GM12878 (cell line): ENCODE measurements at regions of chr1 and their contacts with region 1.

Region 1: GRCh38 chr1:98783821-98784220 is 122.3 kb downstream of the SNX7 start:
- DNase-seq: no peak
- ATAC-seq: no peak
- H3K4me3 ChIP-seq: no peak overlapping the region
- H3K27ac ChIP-seq: no peak overlapping the region
- H3K4me1 ChIP-seq: no peaks in the 10 kb centered on the region
- H3K27me3 ChIP-seq: no peaks in the 10 kb centered on the region
- CTCF ChIP-seq: no peak
- EP300 ChIP-seq: no peak
- POLR2A ChIP-seq: no peak
- RAD21 ChIP-seq: no peak

Region 2: DNA sequence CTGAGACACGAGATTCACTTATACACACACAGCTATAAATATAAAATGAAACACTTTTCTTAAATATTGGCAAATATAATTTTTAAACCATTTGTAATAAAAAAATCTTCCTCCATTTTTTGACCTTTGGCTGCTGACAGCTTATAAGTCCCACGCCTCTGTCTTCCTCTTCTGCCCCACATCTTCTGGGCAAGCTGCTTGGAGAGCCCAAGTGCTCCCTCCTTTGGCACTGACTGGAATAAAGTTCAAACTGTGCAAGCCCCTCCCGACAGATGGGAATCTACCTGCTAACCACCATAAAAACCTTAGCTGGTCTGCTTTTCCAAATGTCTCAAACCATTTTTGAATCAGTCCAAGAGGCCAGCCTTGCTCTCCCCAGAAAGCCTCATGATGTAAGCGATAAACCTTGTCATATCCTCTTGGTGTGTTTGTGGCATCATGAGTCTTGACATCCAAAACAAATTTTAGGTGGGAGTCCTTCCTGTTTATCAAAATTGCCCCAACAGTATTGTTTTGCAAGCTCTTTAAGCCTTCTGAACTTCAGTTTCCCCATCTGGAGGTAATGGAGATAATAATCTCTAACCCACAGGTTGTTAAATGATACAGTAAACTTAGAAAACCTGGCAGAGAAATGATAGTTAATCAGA is 22.5 kb before region 1 on chr1:
- CTCF ChIA-PET with region 1: no interaction called
- POLR2A ChIA-PET with region 1: no interaction called
- RAD21 ChIA-PET with region 1: no interaction called
- SMC1A ChIA-PET with region 1: no interaction called
- in situ Hi-C with region 1: no loop called
- intact Hi-C with region 1: no loop called
- DNase-seq: no peak
- ATAC-seq: peak; percentile 58; the same call in 1 of the 3 replicates
- H3K4me3 ChIP-seq: no peak overlapping the region
- H3K27ac ChIP-seq: no peak overlapping the region
- H3K4me1 ChIP-seq: no peaks in the 10 kb centered on the region
- H3K27me3 ChIP-seq: no peaks in the 10 kb centered on the region
- CTCF ChIP-seq: peak in 1 of 3 experiments; percentile 37; a peak in 2 of 6 replicates
- EP300 ChIP-seq: no peak
- POLR2A ChIP-seq: no peak
- RAD21 ChIP-seq: peak; percentile 31; the same call in 1 of the 2 replicates

Region 3: GRCh38 chr1:99461499-99461898 is 677.7 kb after region 1 on chr1:
- CTCF ChIA-PET with region 1: no interaction called
- POLR2A ChIA-PET with region 1: no interaction called
- RAD21 ChIA-PET with region 1: no interaction called
- SMC1A ChIA-PET with region 1: no interaction called
- in situ Hi-C with region 1: no loop called
- intact Hi-C with region 1: loop called (anchors 5 kb)
- DNase-seq: no peak
- ATAC-seq: no peak
- H3K4me3 ChIP-seq: no peak overlapping the region
- H3K27ac ChIP-seq: no peak overlapping the region
- H3K4me1 ChIP-seq: no peaks in the 10 kb centered on the region
- H3K27me3 ChIP-seq: no peaks in the 10 kb centered on the region; a peak in 1 of 4 replicates
- CTCF ChIP-seq: no peak
- EP300 ChIP-seq: no peak
- POLR2A ChIP-seq: no peak
- RAD21 ChIP-seq: no peak